Heart left ventricle (tissue), 16 donors: ENCODE measurements at regions of chr7 and their contacts with region 1.

Region 1: GRCh38 chr7:132580717-132581285 is 4.5 kb upstream of the PLXNA4 start:
- DNase-seq: peak; percentile 70 to 76 (median 74)
- ATAC-seq: peak; percentile 25 to 60 (median 44)
- H3K4me3 ChIP-seq: no peak overlapping the region
- H3K27ac ChIP-seq: no peak overlapping the region
- H3K4me1 ChIP-seq: peaks cover 0 to 18% (median 6%) of the 10 kb centered on the region in 12 donors
- H3K27me3 ChIP-seq: peaks cover 0 to 26% (median 0%) of the 10 kb centered on the region in 9 donors
- CTCF ChIP-seq: peak; percentile 60 to 87 (median 76)
- POLR2A ChIP-seq: no peak

Region 2: GRCh38 chr7:131688738-131689661 is 891.8 kb before region 1 on chr7:
- intact Hi-C with region 1: loop called in 6 of 10 experiments (anchors 5 to 10 kb)
- DNase-seq: peak; percentile 56 to 73 (median 62)
- ATAC-seq: peak; percentile 58 to 74 (median 70)
- H3K4me3 ChIP-seq: no peak overlapping the region
- H3K27ac ChIP-seq: no peak overlapping the region
- H3K4me1 ChIP-seq: peaks cover 0 to 19% (median 6%) of the 10 kb centered on the region in 12 donors
- H3K27me3 ChIP-seq: peaks cover 0 to 41% (median 18%) of the 10 kb centered on the region in 9 donors
- CTCF ChIP-seq: peak; percentile 90 to 96 (median 93)
- POLR2A ChIP-seq: no peak

Region 3: GRCh38 chr7:132004536-132005272 is 576.1 kb before region 1 on chr7:
- intact Hi-C with region 1: loop called in 3 of 10 experiments (anchors 2 to 10 kb)
- DNase-seq: peak in 3 of 5 donors; percentile 21 to 43 (median 41)
- ATAC-seq: peak; percentile 71 to 90 (median 88)
- H3K4me3 ChIP-seq: no peak overlapping the region
- H3K27ac ChIP-seq: no peak overlapping the region
- H3K4me1 ChIP-seq: peaks cover 0 to 2% (median 0%) of the 10 kb centered on the region in 12 donors
- H3K27me3 ChIP-seq: no peaks in the 10 kb centered on the region
- CTCF ChIP-seq: peak in 11 of 12 donors; percentile 15 to 57 (median 46)
- POLR2A ChIP-seq: no peak

Region 4: GRCh38 chr7:132206594-132206993 is 374.2 kb before region 1 on chr7:
- intact Hi-C with region 1: loop called in 1 of 10 experiments (anchors 5 kb)
- DNase-seq: peak in 3 of 5 donors; percentile 35 to 39 (median 39)
- ATAC-seq: peak; percentile 29 to 69 (median 43)
- H3K4me3 ChIP-seq: no peak overlapping the region
- H3K27ac ChIP-seq: peak overlapping the region in 11 of 12 donors; percentile 17 to 92 (median 76)
- H3K4me1 ChIP-seq: peaks cover 0 to 25% (median 8%) of the 10 kb centered on the region in 12 donors
- H3K27me3 ChIP-seq: no peaks in the 10 kb centered on the region
- CTCF ChIP-seq: no peak
- POLR2A ChIP-seq: no peak

Region 5: GRCh38 chr7:132394283-132395198 is 186.3 kb before region 1 on chr7:
- intact Hi-C with region 1: loop called in 5 of 10 experiments (anchors 5 to 10 kb)
- DNase-seq: no peak
- ATAC-seq: peak; percentile 3 to 46 (median 30)
- H3K4me3 ChIP-seq: no peak overlapping the region
- H3K27ac ChIP-seq: peak overlapping the region in 4 of 12 donors; percentile 3 to 58 (median 44)
- H3K4me1 ChIP-seq: peaks cover 0 to 56% (median 20%) of the 10 kb centered on the region in 12 donors
- H3K27me3 ChIP-seq: no peaks in the 10 kb centered on the region
- CTCF ChIP-seq: peak in 10 of 12 donors; percentile 3 to 49 (median 36)
- POLR2A ChIP-seq: no peak

Region 6: GRCh38 chr7:132500727-132501440 is 79.9 kb before region 1 on chr7:
- intact Hi-C with region 1: loop called in 2 of 10 experiments (anchors 10 kb)
- DNase-seq: peak in 4 of 5 donors; percentile 64 to 82 (median 73)
- ATAC-seq: peak; percentile 81 to 92 (median 85)
- H3K4me3 ChIP-seq: no peak overlapping the region
- H3K27ac ChIP-seq: peak overlapping the region in 3 of 12 donors; percentile 0 to 37 (median 34)
- H3K4me1 ChIP-seq: peaks cover 0 to 29% (median 6%) of the 10 kb centered on the region in 12 donors
- H3K27me3 ChIP-seq: no peaks in the 10 kb centered on the region
- CTCF ChIP-seq: peak; percentile 15 to 63 (median 50)
- POLR2A ChIP-seq: no peak

Region 7: DNA sequence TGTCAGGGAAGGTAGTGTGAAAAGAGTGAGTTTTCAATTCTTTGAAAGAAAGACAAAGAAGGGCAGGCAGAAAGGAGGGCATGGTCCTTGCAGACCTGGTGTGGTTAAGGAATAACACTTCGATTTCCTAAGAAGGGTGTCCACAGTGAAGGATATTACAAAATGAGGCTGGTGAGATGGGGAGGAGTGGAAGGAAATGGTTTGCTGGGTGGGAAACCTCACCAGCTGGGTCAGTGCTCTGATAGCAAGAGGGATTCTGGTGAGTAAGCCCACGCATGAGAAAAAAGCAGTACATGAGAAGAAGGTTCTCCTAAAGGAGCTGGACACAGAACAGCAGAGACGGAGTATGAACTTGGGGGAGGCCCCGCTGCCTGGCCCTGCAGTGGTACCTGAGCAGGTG is 226.0 kb after region 1 on chr7:
- intact Hi-C with region 1: no loop called
- DNase-seq: no peak
- ATAC-seq: no peak
- H3K4me3 ChIP-seq: no peak overlapping the region
- H3K27ac ChIP-seq: no peak overlapping the region
- H3K4me1 ChIP-seq: peaks cover 0 to 19% (median 0%) of the 10 kb centered on the region in 12 donors
- H3K27me3 ChIP-seq: no peaks in the 10 kb centered on the region
- CTCF ChIP-seq: no peak
- POLR2A ChIP-seq: no peak